ENCODE measurements at regions of chr4 and their contacts with region 1.

Region 1: DNA sequence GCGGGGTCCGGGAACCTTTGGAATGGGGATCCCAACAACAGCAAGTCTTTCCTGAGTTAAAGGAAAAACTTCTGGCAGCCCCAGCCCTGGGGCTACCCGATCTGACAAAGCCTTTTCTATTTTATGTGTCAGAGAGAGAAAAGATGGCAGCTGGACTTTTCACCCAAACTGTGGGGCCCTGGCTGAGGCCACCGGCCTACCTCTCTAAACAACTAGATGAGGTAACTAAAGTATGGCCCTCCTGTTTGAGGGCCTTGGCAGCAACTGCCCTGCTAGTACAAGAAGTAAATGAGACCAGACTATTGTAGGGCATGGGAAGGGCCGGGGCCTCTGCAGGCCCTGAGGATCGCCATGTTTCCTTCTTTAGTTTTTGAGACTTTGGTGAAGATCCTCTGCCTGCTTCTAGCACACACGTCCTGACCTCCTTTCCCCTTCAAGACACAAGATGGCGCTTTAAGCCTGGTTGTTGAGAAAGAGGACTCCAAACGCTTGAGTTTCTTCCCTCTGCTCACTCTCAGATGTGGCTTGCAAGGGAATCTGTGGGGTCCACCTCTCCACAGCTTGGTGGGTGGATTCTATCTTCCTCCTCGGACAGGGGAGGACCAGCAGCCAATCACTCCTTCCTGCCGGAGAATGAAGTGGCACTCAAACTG is 18.5 kb upstream of the DRD5 start:
- DNase-seq: no peak
- H3K4me3 ChIP-seq: no peak overlapping the region
- H3K27ac ChIP-seq: no peak overlapping the region
- H3K4me1 ChIP-seq: no peaks in the 10 kb centered on the region
- H3K27me3 ChIP-seq: peaks cover 31% of the 10 kb centered on the region
- CTCF ChIP-seq: peak; percentile 77

Region 2: GRCh38 chr4:9880406-9881197 is 117.7 kb after region 1 on chr4:
- intact Hi-C with region 1: no loop called
- DNase-seq: no peak
- H3K4me3 ChIP-seq: no peak overlapping the region
- H3K27ac ChIP-seq: no peak overlapping the region
- H3K4me1 ChIP-seq: peaks cover 19% of the 10 kb centered on the region
- H3K27me3 ChIP-seq: no peaks in the 10 kb centered on the region
- CTCF ChIP-seq: no peak

Region 3: GRCh38 chr4:10013722-10014121 is 250.8 kb after region 1 on chr4:
- intact Hi-C with region 1: loop called (anchors 5 kb)
- DNase-seq: peak; percentile 47
- H3K4me3 ChIP-seq: no peak overlapping the region
- H3K27ac ChIP-seq: no peak overlapping the region
- H3K4me1 ChIP-seq: peaks cover 22% of the 10 kb centered on the region
- H3K27me3 ChIP-seq: no peaks in the 10 kb centered on the region
- CTCF ChIP-seq: peak; percentile 62

Region 4: DNA sequence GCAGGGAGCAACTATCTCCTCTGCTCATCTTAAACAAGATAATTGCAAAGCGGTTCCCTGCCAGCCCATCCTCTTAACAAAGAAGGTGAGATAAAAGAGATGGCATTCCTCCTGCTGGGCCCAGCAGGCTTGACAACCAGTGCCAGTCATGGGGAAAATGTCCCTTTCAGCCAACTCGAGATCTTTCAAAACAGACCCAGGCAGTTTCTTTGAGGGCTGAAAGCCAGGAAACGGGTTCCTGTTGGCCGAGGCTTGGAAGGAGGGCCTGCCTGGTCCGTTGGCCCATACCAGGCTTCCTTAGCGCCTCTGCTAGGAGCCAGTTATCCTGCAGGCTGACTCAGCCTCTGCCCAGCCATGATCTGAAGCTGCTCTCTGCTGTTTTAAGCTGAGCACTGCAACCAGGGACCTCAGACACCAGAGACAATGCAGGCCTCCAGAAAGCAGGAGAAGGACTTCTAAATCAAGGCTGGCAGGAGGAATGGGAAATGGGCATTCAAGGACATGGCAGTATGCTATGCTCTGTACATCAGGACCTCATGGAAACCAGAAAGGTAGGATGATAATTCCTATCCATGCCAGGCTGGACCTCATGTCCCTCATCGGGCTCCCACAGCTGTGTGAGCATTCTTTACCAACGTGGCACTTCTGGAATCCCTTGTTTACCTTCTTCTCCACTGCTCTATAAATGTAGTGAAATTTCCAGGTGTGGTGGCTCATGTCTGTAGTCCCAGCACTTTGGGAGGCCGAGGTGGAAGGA is 300.8 kb after region 1 on chr4:
- intact Hi-C with region 1: loop called (anchors 5 kb)
- DNase-seq: peak; percentile 56
- H3K4me3 ChIP-seq: no peak overlapping the region
- H3K27ac ChIP-seq: peak overlapping the region; percentile 54
- H3K4me1 ChIP-seq: peaks cover 18% of the 10 kb centered on the region
- H3K27me3 ChIP-seq: no peaks in the 10 kb centered on the region
- CTCF ChIP-seq: peak; percentile 87